SK-N-SH (cell line): ENCODE measurements at regions of chr2 and their contacts with region 1.

Region 1: DNA sequence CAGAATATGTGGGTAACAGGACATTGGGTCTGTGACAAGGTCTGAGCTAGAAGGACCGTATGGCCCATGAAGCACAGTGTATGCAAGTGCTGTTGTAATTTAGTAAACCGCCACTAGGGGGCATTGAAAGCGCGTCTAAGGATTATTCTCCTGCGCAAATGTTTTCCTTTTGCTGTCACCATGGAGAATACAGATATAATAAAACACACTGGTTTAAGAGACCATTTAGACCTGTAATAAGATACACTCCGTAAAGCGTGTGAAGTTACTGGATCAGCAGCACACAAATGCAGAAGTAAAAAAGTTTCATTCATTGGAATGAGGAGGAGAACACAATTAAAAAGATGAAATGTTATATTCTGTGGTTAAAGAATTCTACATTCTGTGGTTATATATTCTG is 272.4 kb downstream of the AGAP1 start:
- DNase-seq: peak; percentile 81
- H3K4me3 ChIP-seq: no peak overlapping the region; a peak in 1 of 4 replicates
- H3K27ac ChIP-seq: peak overlapping the region in 1 of 2 experiments; percentile 43; a peak in 1 of 4 replicates
- H3K4me1 ChIP-seq: no peaks in the 10 kb centered on the region
- H3K27me3 ChIP-seq: no peaks in the 10 kb centered on the region
- CTCF ChIP-seq: peak; percentile 91
- EP300 ChIP-seq: no peak
- RAD21 ChIP-seq: peak; percentile 84

Region 2: GRCh38 chr2:235754352-235755207 is 11.7 kb before region 1 on chr2:
- CTCF ChIA-PET with region 1: interaction called, 27 read pairs
- POLR2A ChIA-PET with region 1: no interaction called
- DNase-seq: no peak
- H3K4me3 ChIP-seq: no peak overlapping the region
- H3K27ac ChIP-seq: no peak overlapping the region
- H3K4me1 ChIP-seq: no peaks in the 10 kb centered on the region; a peak in 1 of 4 replicates
- H3K27me3 ChIP-seq: no peaks in the 10 kb centered on the region
- CTCF ChIP-seq: no peak
- EP300 ChIP-seq: no peak
- RAD21 ChIP-seq: no peak